PC-3 (cell line): ENCODE measurements at regions of chr3 and their contacts with region 1.

Region 1: DNA sequence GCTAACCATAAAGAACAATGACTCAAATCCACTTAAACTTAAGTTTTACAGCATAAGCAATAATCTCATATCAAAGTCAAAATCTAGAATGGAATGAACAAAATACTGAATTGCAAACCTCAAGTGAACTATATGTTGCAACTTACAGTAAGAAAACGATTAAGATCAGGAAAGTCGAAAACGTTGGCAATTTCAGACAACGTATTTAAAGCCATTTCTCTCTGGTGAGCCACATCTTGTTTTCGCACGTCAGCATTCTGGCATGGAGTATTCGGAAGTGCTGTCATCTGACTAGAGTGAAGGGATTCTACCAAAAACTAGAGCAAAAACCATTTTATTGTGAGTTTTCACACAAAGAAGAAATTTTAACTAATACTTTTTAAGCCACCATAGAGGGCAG is 28.5 kb downstream of the ATR start:
- DNase-seq: no peak
- ATAC-seq: no peak
- H3K4me3 ChIP-seq: no peak overlapping the region
- H3K27ac ChIP-seq: no peak overlapping the region
- H3K4me1 ChIP-seq: no peaks in the 10 kb centered on the region
- H3K27me3 ChIP-seq: no peaks in the 10 kb centered on the region
- CTCF ChIP-seq: no peak

Region 2: GRCh38 chr3:142509079-142509478 is 40.9 kb before region 1 on chr3:
- CTCF ChIA-PET with region 1: no interaction called
- POLR2A ChIA-PET with region 1: no interaction called
- intact Hi-C with region 1: loop called (anchors 5 kb)
- DNase-seq: no peak
- ATAC-seq: no peak
- H3K4me3 ChIP-seq: no peak overlapping the region
- H3K27ac ChIP-seq: no peak overlapping the region
- H3K4me1 ChIP-seq: no peaks in the 10 kb centered on the region
- H3K27me3 ChIP-seq: no peaks in the 10 kb centered on the region
- CTCF ChIP-seq: no peak

Region 3: GRCh38 chr3:142568393-142569017 is 18.5 kb after region 1 on chr3:
- CTCF ChIA-PET with region 1: no interaction called
- POLR2A ChIA-PET with region 1: no interaction called
- intact Hi-C with region 1: no loop called
- DNase-seq: no peak
- ATAC-seq: no peak
- H3K4me3 ChIP-seq: no peak overlapping the region
- H3K27ac ChIP-seq: no peak overlapping the region
- H3K4me1 ChIP-seq: no peaks in the 10 kb centered on the region
- H3K27me3 ChIP-seq: no peaks in the 10 kb centered on the region
- CTCF ChIP-seq: no peak